ENCODE measurements at regions of chr5 and their contacts with region 1.

Region 1: DNA sequence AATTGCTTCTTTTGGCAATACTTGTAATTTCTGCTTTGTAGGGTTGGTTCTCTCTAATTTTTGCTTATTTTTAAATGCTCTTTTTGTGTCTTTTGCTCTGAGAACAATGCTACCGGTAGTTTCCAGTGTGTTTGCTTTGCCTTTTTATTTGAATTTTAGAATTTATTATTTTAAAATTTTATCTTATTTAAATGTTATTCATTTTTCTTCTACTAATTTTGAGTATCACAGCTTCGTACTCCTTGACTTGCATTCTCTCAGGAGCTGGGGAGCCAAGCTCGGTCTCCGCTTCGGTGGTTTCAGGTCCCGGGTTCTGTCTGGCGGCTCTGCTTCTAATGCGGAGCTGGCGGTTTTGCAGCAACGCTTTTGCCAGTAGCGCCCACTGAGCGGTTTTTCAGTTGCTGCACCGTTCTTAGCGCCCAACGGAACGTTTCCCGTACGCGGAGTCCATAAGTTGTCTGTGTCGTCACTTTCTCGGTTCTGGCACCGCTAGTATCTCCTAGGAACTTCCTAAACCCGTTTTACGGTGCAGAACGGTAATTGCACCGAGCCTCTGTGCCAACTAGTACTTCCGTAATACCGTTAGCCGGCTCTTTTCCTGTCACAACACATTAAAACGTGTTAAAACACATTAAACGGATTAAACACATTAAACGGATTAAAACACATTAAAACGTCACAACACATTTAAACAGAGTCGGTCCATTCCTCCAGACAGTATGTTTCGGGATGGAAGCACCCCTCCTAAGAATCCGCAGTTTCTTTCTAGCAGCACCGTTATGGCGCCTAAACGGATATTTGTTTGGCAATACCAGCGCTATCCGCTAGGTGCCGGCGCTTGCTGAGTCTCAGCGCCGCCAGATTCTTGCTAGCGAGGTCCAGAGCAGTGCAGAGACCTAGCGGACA is 45.6 kb downstream of the ANXA2R start:
- DNase-seq: peak; percentile 86 to 91
- ATAC-seq: peak; percentile 82 to 88 (median 84)
- H3K4me3 ChIP-seq: peak overlapping the region; percentile 73
- H3K27ac ChIP-seq: peak overlapping the region; percentile 86
- H3K4me1 ChIP-seq: peaks cover 11% of the 10 kb centered on the region
- H3K27me3 ChIP-seq: peaks cover 6 to 79% (median 53%) of the 10 kb centered on the region in 3 donors
- CTCF ChIP-seq: peak; percentile 87

Region 2: DNA sequence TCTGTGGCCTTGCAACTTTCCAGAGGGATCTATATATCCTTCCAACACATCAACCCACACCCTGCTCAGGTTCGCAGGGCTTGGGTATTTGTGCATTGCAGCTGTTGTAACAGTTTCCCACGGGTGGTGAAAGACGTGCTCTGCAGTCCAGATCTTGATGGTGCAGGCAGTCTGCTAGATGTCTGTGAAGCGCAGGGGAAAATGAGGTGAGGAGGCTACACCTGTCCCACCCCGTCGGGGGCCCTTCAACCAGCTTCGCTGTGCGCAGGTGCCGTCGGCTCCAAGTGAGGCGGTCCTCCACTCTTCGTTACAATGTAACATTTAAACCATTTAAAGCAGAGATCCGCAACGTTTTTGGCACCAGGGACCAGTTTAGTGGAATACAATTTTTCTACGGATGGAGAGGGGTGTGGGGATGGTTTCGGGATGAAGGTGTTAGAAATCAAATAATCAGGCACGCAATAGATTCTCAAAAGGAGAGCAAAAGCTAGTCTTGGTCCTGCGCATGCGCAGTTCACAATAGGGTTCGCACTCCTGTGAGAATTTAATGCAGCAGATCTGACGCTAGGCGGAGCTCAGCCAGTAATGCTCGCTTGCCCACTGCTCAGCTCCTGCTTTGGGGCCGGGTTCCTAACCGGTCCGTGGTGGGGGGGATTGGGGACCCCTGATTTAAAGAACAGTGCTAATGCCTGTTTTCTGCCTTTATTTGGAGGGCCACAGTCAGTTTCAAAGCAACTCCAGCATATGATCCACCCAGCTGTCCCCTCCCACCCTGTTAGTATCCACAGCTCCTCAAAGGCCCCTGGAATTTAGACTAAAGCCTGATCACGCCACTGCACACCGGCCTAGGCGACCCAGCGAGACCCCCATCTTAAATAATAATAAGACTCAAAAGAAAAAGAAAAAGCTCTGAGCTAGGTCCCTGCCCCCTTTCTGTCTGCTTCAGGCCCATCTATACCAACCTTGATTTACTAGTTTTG is 85.7 kb before region 1 on chr5:
- intact Hi-C with region 1: loop called in 1 of 2 experiments (anchors 5 kb)
- DNase-seq: peak; percentile 87 to 92
- ATAC-seq: peak; percentile 91 to 99 (median 96)
- H3K4me3 ChIP-seq: peak overlapping the region; percentile 72
- H3K27ac ChIP-seq: no peak overlapping the region
- H3K4me1 ChIP-seq: no peaks in the 10 kb centered on the region
- H3K27me3 ChIP-seq: no peaks in the 10 kb centered on the region
- CTCF ChIP-seq: peak; percentile 78

Region 3: DNA sequence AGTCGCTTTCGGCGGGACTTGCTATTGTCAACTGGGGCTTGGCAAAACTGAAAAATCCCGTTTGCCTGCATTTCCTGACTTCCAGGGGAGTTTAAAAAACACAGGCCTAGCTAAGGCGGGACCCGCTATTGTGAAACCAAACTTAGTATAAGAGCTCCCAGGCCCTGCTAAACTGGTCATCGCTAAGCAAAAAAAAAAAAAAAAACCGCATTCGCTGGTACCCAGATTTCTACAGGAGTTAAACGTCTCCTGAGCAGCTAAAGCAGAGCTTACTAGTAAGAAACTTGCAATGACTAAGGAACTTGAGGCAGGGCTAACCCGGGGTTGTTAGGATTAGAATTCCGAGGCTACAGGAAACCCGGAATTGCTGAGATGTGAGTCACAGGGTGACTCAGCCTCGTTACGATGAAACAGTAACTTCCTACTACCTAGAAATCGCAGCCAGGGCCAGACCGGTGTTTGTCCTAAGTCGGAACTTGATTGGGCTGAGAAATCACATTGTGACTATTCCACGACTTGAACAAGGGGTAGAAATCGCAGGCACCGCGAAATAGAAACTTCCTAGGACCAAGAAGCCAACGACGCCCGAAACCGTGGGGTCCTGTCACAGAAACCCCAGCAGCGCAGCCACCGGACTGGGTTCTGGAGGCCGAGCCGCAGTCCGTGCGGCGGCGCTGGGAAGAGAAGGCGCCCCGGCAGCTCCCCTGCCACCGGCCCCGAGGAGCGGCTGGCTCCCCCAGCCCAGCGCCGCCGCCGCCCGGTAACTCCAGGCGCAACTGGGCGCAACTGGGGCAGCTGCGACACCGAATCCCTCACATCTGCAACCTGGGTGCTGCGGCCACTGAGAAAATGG is 43.8 kb before region 1 on chr5:
- intact Hi-C with region 1: loop called (anchors 1 to 2 kb)
- DNase-seq: peak; percentile 68 to 74
- ATAC-seq: peak; percentile 79 to 87 (median 85)
- H3K4me3 ChIP-seq: peak overlapping the region; percentile 75
- H3K27ac ChIP-seq: peak overlapping the region; percentile 81
- H3K4me1 ChIP-seq: peaks cover 34% of the 10 kb centered on the region
- H3K27me3 ChIP-seq: peaks cover 6 to 88% (median 44%) of the 10 kb centered on the region in 3 donors
- CTCF ChIP-seq: no peak

Region 4: DNA sequence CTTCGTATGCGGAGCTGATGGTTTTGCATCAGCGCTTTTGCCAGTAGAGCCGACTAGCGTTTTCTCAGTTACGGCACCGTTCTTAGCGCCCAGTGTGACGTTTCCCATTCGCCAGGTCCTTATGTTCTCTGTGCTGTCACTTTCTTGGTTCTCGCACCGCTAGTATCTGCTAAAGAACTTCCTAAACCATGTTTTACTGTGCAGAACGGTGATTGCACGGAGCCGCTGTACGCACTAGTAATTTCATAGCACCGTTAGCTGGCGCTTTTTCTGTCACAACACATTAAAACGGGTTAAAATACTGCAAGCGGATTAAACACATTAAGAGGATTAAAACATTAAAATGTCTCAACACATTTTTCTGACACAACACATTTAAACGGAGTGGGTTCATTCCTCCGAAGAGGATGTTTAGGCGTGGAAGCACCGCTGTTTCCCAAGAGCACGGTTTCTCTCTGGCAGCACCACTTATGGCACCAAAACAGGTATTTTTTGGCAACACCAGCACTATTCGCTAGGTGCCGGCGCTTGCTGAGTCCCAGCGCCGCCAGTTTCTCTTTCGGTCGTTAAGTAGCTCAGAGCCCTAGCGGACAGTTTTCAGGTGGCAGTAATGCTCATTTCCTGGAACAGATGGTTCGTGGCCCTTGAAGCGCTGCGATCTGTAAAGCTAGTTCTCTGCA is 25.3 kb after region 1 on chr5:
- intact Hi-C with region 1: loop called in 1 of 2 experiments (anchors 1 kb)
- DNase-seq: peak; percentile 61 to 78
- ATAC-seq: peak; percentile 53 to 70 (median 64)
- H3K4me3 ChIP-seq: peak overlapping the region; percentile 78
- H3K27ac ChIP-seq: peak overlapping the region; percentile 96
- H3K4me1 ChIP-seq: peaks cover 23% of the 10 kb centered on the region
- H3K27me3 ChIP-seq: peaks cover 0 to 9% (median 3%) of the 10 kb centered on the region in 3 donors
- CTCF ChIP-seq: peak; percentile 47

Region 5: DNA sequence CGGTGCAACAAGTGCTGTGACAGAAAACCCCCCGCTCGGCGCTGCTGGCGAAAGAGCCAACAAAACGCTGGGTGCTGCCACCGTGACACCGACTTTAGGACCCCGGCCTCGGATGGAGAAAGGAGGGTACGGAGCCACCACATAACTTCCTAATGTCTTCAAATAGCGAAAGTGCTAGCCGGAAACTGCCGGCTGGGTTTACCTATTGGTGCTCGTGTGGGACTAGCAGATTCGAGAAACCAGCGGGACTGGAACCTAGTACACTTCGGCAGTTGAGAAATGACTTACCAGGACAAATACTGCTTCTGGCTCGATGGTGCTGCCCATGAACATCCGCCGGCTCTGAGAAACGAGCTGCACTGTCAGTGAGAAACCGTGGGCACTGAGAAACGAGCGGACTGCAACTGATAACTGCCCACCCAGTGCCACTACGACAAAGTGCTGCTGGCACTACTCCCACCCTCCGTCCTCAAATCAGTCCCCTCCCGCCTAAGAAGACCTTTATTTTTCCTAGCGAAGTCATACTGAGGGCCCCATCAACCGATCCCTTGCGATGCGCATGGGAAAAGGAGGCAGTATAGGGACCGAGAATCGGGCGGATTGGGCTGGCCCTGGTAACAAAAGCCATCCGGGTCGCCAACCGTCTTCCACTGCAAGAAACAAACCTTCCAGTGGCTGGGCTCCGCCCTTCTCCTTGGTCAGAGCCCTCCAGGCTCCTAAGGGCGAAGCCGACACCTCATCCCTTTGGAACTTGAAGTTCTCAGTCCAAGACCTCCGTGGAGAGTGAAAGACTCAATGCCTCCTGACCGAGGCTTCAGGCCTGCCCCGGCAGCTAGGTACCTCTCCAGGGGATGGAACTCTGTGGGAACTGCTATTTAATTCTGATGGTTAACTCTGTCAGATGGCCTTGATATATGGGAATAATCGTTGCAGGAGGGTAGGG is 72.6 kb after region 1 on chr5:
- intact Hi-C with region 1: loop called in 1 of 2 experiments (anchors 2 kb)
- DNase-seq: peak; percentile 88 to 93
- ATAC-seq: peak; percentile 70 to 75 (median 73)
- H3K4me3 ChIP-seq: peak overlapping the region; percentile 94
- H3K27ac ChIP-seq: peak overlapping the region; percentile 100
- H3K4me1 ChIP-seq: peaks cover 19% of the 10 kb centered on the region
- H3K27me3 ChIP-seq: no peaks in the 10 kb centered on the region
- CTCF ChIP-seq: no peak

Region 6: GRCh38 chr5:43484106-43484849 is 489.8 kb after region 1 on chr5:
- intact Hi-C with region 1: loop called in 1 of 2 experiments (anchors 10 kb)
- DNase-seq: peak; percentile 83 to 91
- ATAC-seq: peak; percentile 84 to 90 (median 86)
- H3K4me3 ChIP-seq: peak overlapping the region; percentile 90
- H3K27ac ChIP-seq: peak overlapping the region; percentile 98
- H3K4me1 ChIP-seq: peaks cover 14% of the 10 kb centered on the region
- H3K27me3 ChIP-seq: no peaks in the 10 kb centered on the region
- CTCF ChIP-seq: peak; percentile 69